MCF 10A (cell line): ENCODE measurements at regions of chr5 and their contacts with region 1.

Region 1: DNA sequence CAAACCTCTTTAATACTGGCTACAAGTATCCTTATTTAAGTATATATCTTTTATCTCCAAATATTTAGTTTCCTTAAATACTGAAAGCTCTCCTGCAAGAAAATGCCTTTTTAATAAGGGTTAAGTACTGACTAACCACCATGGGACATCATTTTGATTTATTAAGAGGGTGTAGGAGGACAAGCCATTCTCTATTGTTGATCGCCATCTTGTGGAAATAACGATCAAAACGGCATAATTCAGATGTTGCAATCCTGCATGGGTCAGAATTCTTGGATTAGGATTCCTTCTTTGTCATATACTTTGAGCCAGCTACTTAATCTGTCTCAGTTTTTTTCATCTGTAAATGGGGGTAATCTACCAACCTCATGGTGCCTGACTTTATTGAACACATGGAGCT is 28.7 kb upstream of the C5orf46 start:
- DNase-seq: peak; percentile 86
- H3K4me3 Mint-ChIP-seq: no peak overlapping the region
- H3K27ac Mint-ChIP-seq: no peak overlapping the region
- H3K4me1 Mint-ChIP-seq: peaks cover 9% of the 10 kb centered on the region
- H3K27me3 Mint-ChIP-seq: no peaks in the 10 kb centered on the region
- CTCF ChIP-seq: peak; percentile 91

Region 2: DNA sequence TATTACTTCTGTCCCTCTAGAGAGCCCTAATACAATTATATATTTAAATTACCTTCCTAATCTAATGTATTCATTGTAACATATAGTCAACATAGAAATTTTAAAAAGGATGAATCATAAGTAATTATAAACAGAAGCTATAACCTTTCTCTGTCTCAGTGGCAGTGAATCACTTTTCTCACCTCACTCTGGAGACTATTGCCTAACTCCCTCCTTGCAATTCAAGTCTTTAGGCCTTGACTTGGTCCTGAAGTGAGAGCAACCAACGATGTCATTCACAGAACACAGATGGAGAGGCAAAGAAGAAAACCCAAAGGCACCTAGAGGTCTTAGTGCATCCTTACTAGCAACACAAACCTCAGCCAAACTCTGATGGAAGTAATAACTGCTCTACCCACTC is 291.9 kb before region 1 on chr5:
- CTCF ChIA-PET with region 1: interaction called, 4 read pairs
- POLR2A ChIA-PET with region 1: no interaction called
- intact Hi-C with region 1: loop called (anchors 5 kb)
- DNase-seq: peak; percentile 78
- H3K4me3 Mint-ChIP-seq: no peak overlapping the region
- H3K27ac Mint-ChIP-seq: no peak overlapping the region
- H3K4me1 Mint-ChIP-seq: peaks cover 11% of the 10 kb centered on the region
- H3K27me3 Mint-ChIP-seq: peaks cover 11% of the 10 kb centered on the region
- CTCF ChIP-seq: no peak

Region 3: DNA sequence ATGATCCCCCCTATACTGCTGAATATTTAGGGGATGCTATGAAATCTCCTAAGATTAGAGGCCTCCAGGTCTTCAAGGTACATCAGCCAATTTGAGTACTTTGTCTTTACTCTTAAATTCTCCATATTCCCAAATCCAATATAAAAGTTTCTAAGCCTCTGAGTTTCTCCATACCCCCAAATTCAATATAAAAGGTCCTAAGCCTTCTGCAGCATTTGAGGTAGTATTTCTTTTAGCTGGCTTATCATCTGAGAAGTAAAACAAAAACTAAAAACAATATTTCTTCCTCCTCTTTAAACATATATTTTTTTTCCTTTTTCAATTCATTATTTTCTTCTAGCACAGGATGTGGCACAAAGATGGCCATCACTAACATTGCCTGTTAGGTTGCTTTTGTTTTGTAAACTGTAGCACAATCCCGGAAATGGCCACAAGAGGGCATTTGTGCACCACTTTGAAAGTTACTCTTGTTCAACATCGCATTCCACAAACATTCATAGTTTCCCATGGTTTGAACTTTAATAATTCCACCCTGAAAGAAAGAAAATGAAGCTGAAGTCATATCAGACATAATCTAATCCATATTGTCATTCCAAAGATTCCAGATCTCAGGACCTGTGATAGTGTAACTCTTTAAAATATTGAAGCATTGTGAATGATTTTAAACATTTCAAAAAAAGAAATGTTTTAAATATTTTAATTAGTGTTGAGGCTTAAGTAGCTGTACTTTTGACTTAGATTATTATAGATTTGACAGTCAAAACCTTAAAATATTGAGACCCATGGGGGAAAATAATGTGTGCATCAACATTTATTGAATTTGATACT is 77.5 kb before region 1 on chr5:
- CTCF ChIA-PET with region 1: interaction called, 286 read pairs
- POLR2A ChIA-PET with region 1: interaction called, 8 read pairs
- intact Hi-C with region 1: loop called (anchors 1 kb)
- DNase-seq: peak; percentile 80
- H3K4me3 Mint-ChIP-seq: no peak overlapping the region
- H3K27ac Mint-ChIP-seq: no peak overlapping the region
- H3K4me1 Mint-ChIP-seq: no peaks in the 10 kb centered on the region
- H3K27me3 Mint-ChIP-seq: no peaks in the 10 kb centered on the region
- CTCF ChIP-seq: peak; percentile 76

Region 4: DNA sequence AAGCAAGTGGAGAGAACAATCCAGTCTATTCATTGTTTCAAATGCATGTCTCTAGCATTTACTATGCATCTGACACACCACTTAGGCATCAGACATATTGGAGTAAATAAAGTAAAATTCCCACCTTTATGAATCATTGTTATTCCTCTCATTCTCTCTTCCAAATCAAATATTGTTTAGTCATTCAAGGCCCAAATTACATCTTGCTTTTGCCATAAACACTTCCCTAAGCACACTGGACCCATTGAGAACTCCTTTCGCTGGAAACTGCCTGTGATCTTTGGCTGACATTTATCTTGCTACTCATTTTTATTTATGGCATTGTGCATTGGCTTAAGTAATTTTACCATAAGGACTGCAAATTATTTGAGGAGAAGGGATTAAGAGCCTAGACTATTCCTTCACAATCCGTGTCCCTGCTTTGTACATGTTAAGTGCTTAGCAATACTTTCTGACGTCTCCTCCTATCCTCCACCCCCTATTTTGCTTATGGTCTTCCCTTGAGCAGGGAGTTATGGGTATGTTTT is 36.1 kb before region 1 on chr5:
- CTCF ChIA-PET with region 1: interaction called, 28 read pairs
- POLR2A ChIA-PET with region 1: no interaction called
- intact Hi-C with region 1: no loop called
- DNase-seq: peak; percentile 58
- H3K4me3 Mint-ChIP-seq: no peak overlapping the region
- H3K27ac Mint-ChIP-seq: peak overlapping the region; percentile 8
- H3K4me1 Mint-ChIP-seq: peaks cover 28% of the 10 kb centered on the region
- H3K27me3 Mint-ChIP-seq: no peaks in the 10 kb centered on the region
- CTCF ChIP-seq: no peak

Region 5: GRCh38 chr5:147918101-147918685 is 16.8 kb before region 1 on chr5:
- CTCF ChIA-PET with region 1: interaction called, 87 read pairs
- POLR2A ChIA-PET with region 1: interaction called, 4 read pairs
- intact Hi-C with region 1: no loop called
- DNase-seq: peak; percentile 39
- H3K4me3 Mint-ChIP-seq: no peak overlapping the region
- H3K27ac Mint-ChIP-seq: peak overlapping the region; percentile 56
- H3K4me1 Mint-ChIP-seq: peaks cover 37% of the 10 kb centered on the region
- H3K27me3 Mint-ChIP-seq: no peaks in the 10 kb centered on the region
- CTCF ChIP-seq: no peak

Region 6: GRCh38 chr5:148011401-148012132 is 76.5 kb after region 1 on chr5:
- CTCF ChIA-PET with region 1: no interaction called
- POLR2A ChIA-PET with region 1: no interaction called
- intact Hi-C with region 1: no loop called
- DNase-seq: peak; percentile 97
- H3K4me3 Mint-ChIP-seq: no peak overlapping the region
- H3K27ac Mint-ChIP-seq: peak overlapping the region; percentile 43
- H3K4me1 Mint-ChIP-seq: peaks cover 27% of the 10 kb centered on the region
- H3K27me3 Mint-ChIP-seq: no peaks in the 10 kb centered on the region
- CTCF ChIP-seq: no peak

Region 7: DNA sequence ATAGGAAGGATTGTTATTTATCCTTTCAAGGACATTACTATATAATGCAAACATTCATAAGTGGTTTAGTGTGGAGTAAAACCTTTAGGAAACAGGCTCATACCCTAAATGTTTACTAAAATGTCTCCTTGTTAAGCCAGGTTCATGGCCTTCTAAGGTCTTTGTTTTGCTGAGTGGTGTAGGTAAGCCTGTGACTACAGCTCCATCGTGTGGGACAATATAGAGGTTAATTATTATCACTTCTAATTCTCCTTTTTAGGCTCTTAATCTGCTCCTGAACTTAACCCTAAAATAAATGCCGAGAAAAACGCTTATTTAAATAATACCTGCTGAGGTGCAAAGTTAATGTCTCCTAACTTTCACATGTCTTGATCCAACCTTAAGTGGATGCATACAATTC is 172.6 kb after region 1 on chr5:
- CTCF ChIA-PET with region 1: interaction called, 12 read pairs
- POLR2A ChIA-PET with region 1: no interaction called
- intact Hi-C with region 1: no loop called
- DNase-seq: peak; percentile 65
- H3K4me3 Mint-ChIP-seq: no peak overlapping the region
- H3K27ac Mint-ChIP-seq: no peak overlapping the region
- H3K4me1 Mint-ChIP-seq: no peaks in the 10 kb centered on the region
- H3K27me3 Mint-ChIP-seq: no peaks in the 10 kb centered on the region
- CTCF ChIP-seq: peak; percentile 55

Region 8: DNA sequence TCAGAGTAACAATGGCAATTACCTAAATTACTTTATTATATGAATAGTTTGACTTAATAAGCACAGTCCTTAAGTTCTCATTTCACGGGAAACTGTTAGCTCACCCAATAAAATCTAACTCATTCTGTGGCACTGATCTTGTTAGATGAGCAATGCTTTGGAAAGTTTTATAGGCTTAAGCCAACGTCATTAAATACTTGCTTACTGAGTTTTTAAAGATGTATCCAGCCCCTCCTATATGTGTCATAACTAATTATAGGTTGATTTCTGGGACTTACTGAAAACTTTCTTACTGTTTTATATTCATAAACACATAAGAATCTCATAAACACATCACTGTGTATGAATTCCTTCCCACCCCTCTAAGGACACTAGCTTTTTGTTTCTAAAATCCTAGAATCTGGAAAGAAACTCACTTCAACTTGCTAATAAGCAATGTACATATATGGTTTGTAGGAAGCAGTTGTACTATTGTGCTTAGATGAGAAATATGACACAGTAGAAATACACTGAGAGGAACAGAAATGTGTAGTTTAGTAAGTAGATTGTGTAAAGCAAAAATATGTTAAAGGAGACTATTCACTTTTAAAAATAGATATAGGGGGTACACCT is 289.2 kb after region 1 on chr5:
- CTCF ChIA-PET with region 1: no interaction called
- POLR2A ChIA-PET with region 1: no interaction called
- intact Hi-C with region 1: no loop called
- DNase-seq: peak; percentile 40
- H3K4me3 Mint-ChIP-seq: no peak overlapping the region
- H3K27ac Mint-ChIP-seq: peak overlapping the region; percentile 82
- H3K4me1 Mint-ChIP-seq: peaks cover 9% of the 10 kb centered on the region
- H3K27me3 Mint-ChIP-seq: no peaks in the 10 kb centered on the region
- CTCF ChIP-seq: no peak